ENCODE measurements at regions of chr11 and their contacts with region 1.

Region 1: DNA sequence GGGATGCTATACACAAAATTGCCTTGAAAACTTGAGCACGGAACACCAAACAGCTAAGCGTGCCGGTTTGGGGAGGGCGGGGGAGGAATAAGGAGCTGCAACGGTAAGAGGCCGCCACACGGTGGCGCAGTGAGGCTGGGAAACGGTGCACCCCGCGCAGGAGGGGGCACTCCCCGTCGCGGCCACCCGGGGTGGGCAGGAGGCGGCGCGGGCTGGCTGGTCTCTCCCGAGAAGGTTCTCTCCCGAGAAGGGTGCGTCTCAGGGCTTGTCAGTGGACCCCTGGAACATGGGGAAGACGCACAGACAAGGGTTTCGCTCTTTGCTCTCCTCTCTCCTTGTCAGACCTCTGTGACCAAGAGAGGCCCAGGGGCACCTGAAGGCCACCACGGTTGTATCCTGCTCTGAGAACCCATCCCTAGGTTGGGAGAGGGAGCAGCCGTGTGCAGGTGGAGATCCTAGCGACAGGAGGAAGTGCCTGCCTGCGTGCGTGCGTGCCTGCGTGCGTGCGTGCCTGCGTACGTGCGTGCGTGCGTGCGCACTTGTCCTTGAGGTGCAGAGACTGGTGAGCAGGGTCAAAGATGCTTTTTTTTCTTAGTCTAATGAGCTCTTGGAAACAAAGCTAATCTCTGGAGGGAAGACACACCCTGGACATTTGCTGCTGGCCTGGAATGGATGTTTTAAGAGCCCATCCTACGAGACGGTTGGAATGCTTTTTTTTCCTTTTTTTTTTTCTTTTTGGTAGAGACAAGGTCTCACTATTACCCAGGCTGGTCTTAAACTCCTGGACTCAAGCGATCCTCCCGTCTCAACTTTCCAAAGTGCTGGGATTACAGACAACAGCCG is 18.1 kb upstream of the JAM3 start:
- DNase-seq: peak in 9 of 10 donors; percentile 77 to 98 (median 83)

Region 2: GRCh38 chr11:133927690-133928627 is 122.8 kb before region 1 on chr11:
- intact Hi-C with region 1: loop called (anchors 5 kb)
- DNase-seq: peak; percentile 54 to 97 (median 76)

Region 3: GRCh38 chr11:134068829-134069425 is 18.2 kb after region 1 on chr11 and contains the start of gene JAM3:
- intact Hi-C with region 1: loop called (anchors 2 kb)
- DNase-seq: peak; percentile 97 to 100 (median 98)

Region 4: GRCh38 chr11:134139873-134140331 is 89.1 kb after region 1 on chr11:
- intact Hi-C with region 1: loop called (anchors 1 kb)
- DNase-seq: peak in 9 of 10 donors; percentile 46 to 95 (median 76)

Region 5: GRCh38 chr11:134181707-134182106 is 130.9 kb after region 1 on chr11:
- intact Hi-C with region 1: no loop called
- DNase-seq: no peak

Region 6: GRCh38 chr11:134223836-134224709 is 173.3 kb after region 1 on chr11 and contains the starts of genes NCAPD3 and VPS26B:
- intact Hi-C with region 1: loop called (anchors 10 kb)
- DNase-seq: peak; percentile 90 to 99 (median 96)

Region 7: GRCh38 chr11:134331354-134332188 is 280.8 kb after region 1 on chr11 and contains the start of gene GLB1L2:
- intact Hi-C with region 1: no loop called
- DNase-seq: peak; percentile 42 to 97 (median 70)